Naive thymus-derived CD4-positive, alpha-beta T cell (primary cell): ENCODE measurements at regions of chr18 and their contacts with region 1.

Region 1: GRCh38 chr18:59139371-59140298 is at the start of gene SEC11C:
- DNase-seq: peak; percentile 89 to 98 (median 98)
- ATAC-seq: peak; percentile 93
- H3K4me3 ChIP-seq: peak within 1 kb of the TSS; percentile 98
- H3K4me3 Mint-ChIP-seq: peak within 1 kb of the TSS; percentile 91 to 98 (median 96)
- H3K27ac ChIP-seq: peak within 1 kb of the TSS; percentile 98
- H3K27ac Mint-ChIP-seq: peak within 1 kb of the TSS; percentile 93 to 100 (median 100)
- H3K4me1 ChIP-seq: peaks cover 15 to 17% of the 10 kb centered on the region in 2 donors
- H3K4me1 Mint-ChIP-seq: peaks cover 19 to 48% (median 39%) of the 10 kb centered on the region in 7 donors
- H3K27me3 ChIP-seq: no peaks in the 10 kb centered on the region
- H3K27me3 Mint-ChIP-seq: peaks cover 2 to 16% (median 9%) of the 10 kb centered on the region in 5 donors
- total RNA-seq, gene SEC11C: 41.4 to 111 (median 53.8) TPM

Region 2: GRCh38 chr18:57630002-57630753 is 1509.5 kb before region 1 on chr18:
- CTCF ChIA-PET with region 1: no interaction called
- POLR2A ChIA-PET with region 1: no interaction called
- intact Hi-C with region 1: loop called in 1 of 2 experiments (anchors 1 kb)
- DNase-seq: peak; percentile 89 to 95 (median 93)
- ATAC-seq: peak; percentile 99
- H3K4me3 ChIP-seq: peak overlapping the region; percentile 88
- H3K4me3 Mint-ChIP-seq: peak overlapping the region; percentile 88 to 98 (median 96)
- H3K27ac ChIP-seq: peak overlapping the region; percentile 79
- H3K27ac Mint-ChIP-seq: peak overlapping the region; percentile 84 to 99 (median 97)
- H3K4me1 ChIP-seq: peaks cover 10 to 11% of the 10 kb centered on the region in 2 donors
- H3K4me1 Mint-ChIP-seq: peaks cover 9 to 23% (median 20%) of the 10 kb centered on the region in 7 donors
- H3K27me3 ChIP-seq: no peaks in the 10 kb centered on the region
- H3K27me3 Mint-ChIP-seq: no peaks in the 10 kb centered on the region

Region 3: DNA sequence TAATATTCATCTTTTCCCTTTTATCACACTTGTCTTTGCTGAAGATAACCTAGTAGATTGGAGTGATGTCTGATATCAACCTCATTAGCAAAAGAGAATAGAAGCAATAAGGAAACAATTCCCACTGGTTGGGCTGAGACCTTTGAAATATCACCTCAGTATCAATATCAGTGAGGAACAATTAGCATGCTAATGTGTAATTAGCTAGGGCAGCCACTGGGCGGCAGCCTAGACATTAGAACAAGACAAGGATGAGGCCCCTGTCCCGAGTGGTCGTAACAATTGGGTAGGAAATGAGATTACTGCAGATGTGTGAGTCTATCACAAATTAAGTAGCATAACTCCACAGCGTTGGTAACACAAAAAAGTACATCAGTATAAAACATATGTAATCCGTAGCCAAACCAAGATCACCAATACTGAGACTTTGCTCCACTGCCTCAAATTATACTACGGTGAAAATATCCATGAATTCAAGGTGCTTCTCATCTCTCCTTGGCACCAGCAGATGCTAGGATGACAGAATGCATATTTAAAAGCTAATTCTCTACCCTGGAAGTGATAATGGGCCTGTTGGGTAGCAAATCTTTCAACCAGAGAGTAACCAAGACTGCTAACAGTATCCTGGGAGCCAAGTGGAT is 609.8 kb before region 1 on chr18:
- CTCF ChIA-PET with region 1: no interaction called
- POLR2A ChIA-PET with region 1: no interaction called
- intact Hi-C with region 1: loop called in 1 of 2 experiments (anchors 5 kb)
- DNase-seq: peak; percentile 39 to 71 (median 60)
- ATAC-seq: peak; percentile 87
- H3K4me3 ChIP-seq: no peak overlapping the region
- H3K4me3 Mint-ChIP-seq: no peak overlapping the region
- H3K27ac ChIP-seq: no peak overlapping the region
- H3K27ac Mint-ChIP-seq: no peak overlapping the region
- H3K4me1 ChIP-seq: no peaks in the 10 kb centered on the region
- H3K4me1 Mint-ChIP-seq: peaks cover 0 to 13% (median 6%) of the 10 kb centered on the region in 7 donors
- H3K27me3 ChIP-seq: no peaks in the 10 kb centered on the region
- H3K27me3 Mint-ChIP-seq: peaks cover 0 to 41% (median 0%) of the 10 kb centered on the region in 5 donors

Region 4: GRCh38 chr18:58671111-58671631 is 468.5 kb before region 1 on chr18 and contains the start of gene MALT1:
- CTCF ChIA-PET with region 1: no interaction called
- POLR2A ChIA-PET with region 1: no interaction called
- intact Hi-C with region 1: loop called (anchors 1 kb)
- DNase-seq: peak; percentile 88 to 98 (median 92)
- ATAC-seq: peak; percentile 95
- H3K4me3 ChIP-seq: peak within 1 kb of the TSS; percentile 95
- H3K4me3 Mint-ChIP-seq: peak within 1 kb of the TSS; percentile 93 to 98 (median 96)
- H3K27ac ChIP-seq: peak within 1 kb of the TSS; percentile 88
- H3K27ac Mint-ChIP-seq: peak within 1 kb of the TSS; percentile 92 to 96 (median 95)
- H3K4me1 ChIP-seq: peaks cover 26 to 34% of the 10 kb centered on the region in 2 donors
- H3K4me1 Mint-ChIP-seq: peaks cover 36 to 70% (median 58%) of the 10 kb centered on the region in 7 donors
- H3K27me3 ChIP-seq: no peaks in the 10 kb centered on the region
- H3K27me3 Mint-ChIP-seq: peaks cover 0 to 6% (median 0%) of the 10 kb centered on the region in 5 donors
- total RNA-seq, gene MALT1: 50.0 to 101 (median 80.0) TPM

Region 5: DNA sequence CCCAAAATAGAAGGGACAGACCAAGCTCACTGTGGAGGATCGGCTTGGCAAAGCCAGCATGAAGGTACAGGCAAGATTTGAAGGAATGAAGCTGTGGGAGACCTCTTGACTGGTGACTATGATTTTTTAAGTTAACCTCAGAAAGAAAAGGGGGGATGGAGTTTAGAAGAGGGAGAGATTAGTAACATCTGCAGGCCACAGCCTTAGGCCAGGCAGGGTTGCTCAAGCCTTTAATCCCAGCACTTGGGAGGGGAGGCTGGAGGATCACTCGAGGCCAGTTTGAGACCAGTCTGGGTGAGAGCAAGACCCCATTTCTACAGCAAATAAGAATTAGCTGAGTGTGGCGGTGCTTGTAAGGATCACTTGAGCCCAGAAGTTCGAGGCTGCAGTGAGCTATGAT is 228.4 kb before region 1 on chr18:
- CTCF ChIA-PET with region 1: no interaction called
- POLR2A ChIA-PET with region 1: no interaction called
- intact Hi-C with region 1: no loop called
- DNase-seq: no peak
- ATAC-seq: no peak
- H3K4me3 ChIP-seq: no peak overlapping the region
- H3K4me3 Mint-ChIP-seq: no peak overlapping the region
- H3K27ac ChIP-seq: no peak overlapping the region
- H3K27ac Mint-ChIP-seq: no peak overlapping the region
- H3K4me1 ChIP-seq: no peaks in the 10 kb centered on the region
- H3K4me1 Mint-ChIP-seq: peaks cover 0 to 15% (median 9%) of the 10 kb centered on the region in 7 donors
- H3K27me3 ChIP-seq: no peaks in the 10 kb centered on the region
- H3K27me3 Mint-ChIP-seq: peaks cover 0 to 24% (median 18%) of the 10 kb centered on the region in 5 donors

Region 6: GRCh38 chr18:59085797-59086196 is 53.8 kb before region 1 on chr18:
- CTCF ChIA-PET with region 1: no interaction called
- POLR2A ChIA-PET with region 1: no interaction called
- intact Hi-C with region 1: loop called in 1 of 2 experiments (anchors 1 kb)
- DNase-seq: no peak
- ATAC-seq: no peak
- H3K4me3 ChIP-seq: no peak overlapping the region
- H3K4me3 Mint-ChIP-seq: no peak overlapping the region
- H3K27ac ChIP-seq: no peak overlapping the region
- H3K27ac Mint-ChIP-seq: no peak overlapping the region
- H3K4me1 ChIP-seq: peaks cover 0 to 8% of the 10 kb centered on the region in 2 donors
- H3K4me1 Mint-ChIP-seq: peaks cover 3 to 18% (median 13%) of the 10 kb centered on the region in 7 donors
- H3K27me3 ChIP-seq: peaks cover 0 to 4% of the 10 kb centered on the region in 2 donors
- H3K27me3 Mint-ChIP-seq: peaks cover 12 to 22% (median 20%) of the 10 kb centered on the region in 5 donors

Region 7: GRCh38 chr18:59885579-59886163 is 746.0 kb after region 1 on chr18:
- CTCF ChIA-PET with region 1: no interaction called
- POLR2A ChIA-PET with region 1: no interaction called
- intact Hi-C with region 1: loop called in 1 of 2 experiments (anchors 10 kb)
- DNase-seq: peak in 1 of 9 donors; percentile 32
- ATAC-seq: peak; percentile 62
- H3K4me3 ChIP-seq: no peak overlapping the region
- H3K4me3 Mint-ChIP-seq: peak overlapping the region in 5 of 10 donors; percentile 6 to 66 (median 8)
- H3K27ac ChIP-seq: no peak overlapping the region
- H3K27ac Mint-ChIP-seq: peak overlapping the region in 5 of 9 donors; percentile 4 to 76 (median 32)
- H3K4me1 ChIP-seq: peaks cover 8 to 9% of the 10 kb centered on the region in 2 donors
- H3K4me1 Mint-ChIP-seq: peaks cover 10 to 50% (median 27%) of the 10 kb centered on the region in 7 donors
- H3K27me3 ChIP-seq: no peaks in the 10 kb centered on the region
- H3K27me3 Mint-ChIP-seq: no peaks in the 10 kb centered on the region